GM13977 (cell line): ENCODE measurements at regions of chr1 and their contacts with region 1.

Region 1: DNA sequence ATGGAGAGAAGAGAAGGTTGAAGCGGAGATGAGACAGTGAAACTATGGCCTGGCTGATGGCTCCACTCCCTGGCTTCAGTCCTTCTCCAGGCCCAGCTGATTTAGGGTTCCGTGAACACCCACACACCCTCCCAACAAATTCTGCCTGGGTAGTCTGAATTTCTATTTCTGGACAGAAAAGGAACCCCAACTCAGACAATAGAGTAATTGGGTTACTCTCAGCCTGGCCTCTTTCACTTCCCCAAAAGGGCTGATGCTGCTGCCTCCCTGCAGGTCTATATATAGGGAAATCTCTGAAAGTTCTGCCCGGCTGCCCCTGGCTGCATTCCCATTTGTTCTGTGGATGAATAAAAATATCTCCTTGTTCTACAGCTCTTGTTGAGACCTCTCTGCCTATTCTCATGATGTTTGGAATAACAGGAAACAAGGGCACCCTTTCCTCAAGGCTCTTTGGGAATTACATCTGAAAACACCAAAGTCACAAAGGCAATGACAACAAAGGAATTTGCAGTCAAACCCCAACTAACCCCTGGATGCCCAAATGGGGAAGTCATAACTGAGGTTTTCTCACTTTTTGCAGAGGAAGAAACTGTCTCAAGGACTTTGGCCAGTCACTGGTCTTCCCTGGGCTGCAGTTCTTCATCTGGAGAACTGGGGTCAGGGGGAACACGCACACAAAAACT is 11.4 kb upstream of the ZSCAN20 start:
- DNase-seq: peak; percentile 64
- CTCF ChIP-seq: no peak

Region 2: GRCh38 chr1:32372149-32372756 is 1088.8 kb before region 1 on chr1:
- in situ Hi-C with region 1: no loop called
- DNase-seq: no peak
- CTCF ChIP-seq: peak; percentile 23

Region 3: DNA sequence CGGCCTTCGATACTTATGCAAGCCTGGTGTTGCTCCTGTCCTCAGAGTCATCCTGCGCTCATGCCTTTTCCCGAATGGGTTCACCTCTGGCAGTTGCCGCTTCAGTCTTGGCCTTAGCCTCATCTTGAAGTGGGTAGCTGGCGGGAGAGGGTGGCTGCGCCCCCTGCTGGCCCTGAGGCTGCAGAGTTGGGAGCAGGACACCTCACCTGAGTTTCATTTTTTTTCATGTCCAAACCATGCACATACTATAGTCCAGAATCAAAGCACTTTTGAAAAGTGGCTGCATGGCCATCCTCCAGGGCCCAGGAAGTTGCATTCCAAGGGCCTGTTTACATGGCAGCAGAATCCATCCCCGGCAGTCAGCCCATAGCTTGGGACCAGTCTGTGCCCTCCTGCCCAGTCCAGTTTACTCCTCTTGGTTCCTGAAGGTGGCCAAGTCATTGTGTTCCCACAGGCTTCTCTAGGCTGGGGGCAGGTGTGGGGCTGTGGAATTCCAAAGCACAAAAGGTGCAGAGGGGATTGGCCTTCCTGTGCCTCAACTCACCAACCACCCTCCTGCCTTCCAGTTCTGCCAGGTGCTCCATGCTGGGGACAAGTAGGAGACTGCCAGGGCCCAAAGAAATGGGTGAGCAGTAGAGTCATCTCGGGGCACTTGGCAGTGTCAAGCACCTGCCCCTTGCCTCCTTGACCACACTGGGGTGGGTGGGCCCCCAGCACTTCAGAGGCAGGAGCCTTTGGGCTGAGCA is 687.9 kb before region 1 on chr1:
- in situ Hi-C with region 1: no loop called
- DNase-seq: peak; percentile 90
- CTCF ChIP-seq: peak; percentile 99

Region 4: GRCh38 chr1:33137800-33138199 is 323.3 kb before region 1 on chr1:
- in situ Hi-C with region 1: no loop called
- DNase-seq: no peak
- CTCF ChIP-seq: peak; percentile 47

Region 5: GRCh38 chr1:33378976-33379375 is 82.1 kb before region 1 on chr1:
- in situ Hi-C with region 1: loop called (anchors 10 kb)
- DNase-seq: no peak
- CTCF ChIP-seq: no peak